ENCODE measurements at regions of chr10 and their contacts with region 1.

Region 1: GRCh38 chr10:119207367-119207668 is at the start of gene GRK5:
- DNase-seq: peak; percentile 98
- ATAC-seq: peak; percentile 83
- H3K4me3 ChIP-seq: peak within 1 kb of the TSS; percentile 44 to 94 (median 74)
- H3K4me3 Mint-ChIP-seq: peak within 1 kb of the TSS; percentile 95
- H3K27ac ChIP-seq: peak within 1 kb of the TSS; percentile 73 to 83
- H3K27ac Mint-ChIP-seq: peak within 1 kb of the TSS; percentile 95
- H3K4me1 ChIP-seq: peaks cover 27 to 38% of the 10 kb centered on the region in 2 donors
- H3K4me1 Mint-ChIP-seq: peaks cover 43% of the 10 kb centered on the region
- H3K27me3 ChIP-seq: no peaks in the 10 kb centered on the region
- H3K27me3 Mint-ChIP-seq: no peaks in the 10 kb centered on the region
- CTCF ChIP-seq: no peak
- total RNA-seq, gene GRK5: 54.8 and 57.2 TPM in 2 replicates

Region 2: GRCh38 chr10:119080521-119081260 is 126.6 kb before region 1 on chr10 and contains the start of gene EIF3A:
- CTCF ChIA-PET with region 1: no interaction called
- POLR2A ChIA-PET with region 1: no interaction called
- intact Hi-C with region 1: loop called (anchors 1 kb)
- DNase-seq: peak; percentile 95
- ATAC-seq: peak; percentile 81
- H3K4me3 ChIP-seq: peak within 1 kb of the TSS; percentile 69 to 93 (median 86)
- H3K4me3 Mint-ChIP-seq: peak within 1 kb of the TSS; percentile 96
- H3K27ac ChIP-seq: peak within 1 kb of the TSS; percentile 92 to 97
- H3K27ac Mint-ChIP-seq: peak within 1 kb of the TSS; percentile 96
- H3K4me1 ChIP-seq: peaks cover 36 to 52% of the 10 kb centered on the region in 2 donors
- H3K4me1 Mint-ChIP-seq: peaks cover 50% of the 10 kb centered on the region
- H3K27me3 ChIP-seq: no peaks in the 10 kb centered on the region
- H3K27me3 Mint-ChIP-seq: no peaks in the 10 kb centered on the region
- CTCF ChIP-seq: no peak
- total RNA-seq, gene EIF3A: 94.3 and 94.5 TPM in 2 replicates

Region 3: GRCh38 chr10:119217991-119218490 is 10.7 kb after region 1 on chr10:
- CTCF ChIA-PET with region 1: interaction called, 21 read pairs
- POLR2A ChIA-PET with region 1: no interaction called
- intact Hi-C with region 1: no loop called
- DNase-seq: no peak
- ATAC-seq: no peak
- H3K4me3 ChIP-seq: no peak overlapping the region
- H3K4me3 Mint-ChIP-seq: no peak overlapping the region
- H3K27ac ChIP-seq: no peak overlapping the region
- H3K27ac Mint-ChIP-seq: no peak overlapping the region
- H3K4me1 ChIP-seq: peaks cover 9 to 20% of the 10 kb centered on the region in 2 donors
- H3K4me1 Mint-ChIP-seq: peaks cover 36% of the 10 kb centered on the region
- H3K27me3 ChIP-seq: no peaks in the 10 kb centered on the region
- H3K27me3 Mint-ChIP-seq: no peaks in the 10 kb centered on the region
- CTCF ChIP-seq: no peak

Region 4: DNA sequence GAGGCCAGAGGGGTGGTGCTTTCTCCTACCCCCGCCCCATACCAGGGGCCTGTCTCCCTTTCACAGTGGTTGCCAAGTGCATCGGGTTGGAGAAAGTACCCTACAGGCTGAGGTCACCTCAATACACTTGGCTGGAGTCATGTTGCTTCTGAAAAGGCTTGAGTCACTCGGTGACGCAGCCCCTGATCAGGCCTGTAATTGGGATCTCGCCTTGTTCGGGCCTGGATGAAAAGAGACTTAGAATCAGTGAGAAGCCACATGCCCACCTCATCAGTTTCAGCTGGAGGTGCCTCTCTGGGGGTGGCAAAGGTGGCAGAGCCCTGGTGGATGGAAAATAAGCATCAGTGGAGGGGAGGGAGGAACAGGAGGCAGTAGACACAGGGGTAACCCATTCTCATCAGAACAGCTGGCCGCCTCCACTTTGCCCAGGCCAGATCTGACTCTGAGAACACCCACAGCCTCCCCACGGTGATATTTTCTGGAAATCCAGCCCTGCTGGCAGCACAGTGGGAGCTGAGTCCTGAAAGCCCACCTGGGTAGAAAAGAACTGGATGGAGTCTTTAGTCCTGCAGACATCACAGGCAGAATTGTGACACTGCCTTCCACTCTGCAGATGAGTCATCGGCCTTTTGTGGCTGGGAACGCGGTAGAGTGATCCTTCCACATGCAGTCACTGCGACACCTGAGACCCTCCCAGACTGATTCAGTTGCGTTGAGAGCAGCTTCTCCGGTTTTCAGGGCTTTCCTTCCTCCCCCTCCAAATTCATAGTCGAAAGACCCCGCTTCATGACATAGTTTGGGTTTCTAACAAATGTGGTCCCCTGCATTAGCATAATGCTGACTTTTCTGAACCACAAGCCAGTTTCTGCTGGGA is 108.0 kb after region 1 on chr10:
- CTCF ChIA-PET with region 1: interaction called, 118 read pairs
- POLR2A ChIA-PET with region 1: no interaction called
- intact Hi-C with region 1: no loop called
- DNase-seq: no peak
- ATAC-seq: peak; percentile 32
- H3K4me3 ChIP-seq: no peak overlapping the region
- H3K4me3 Mint-ChIP-seq: peak overlapping the region; percentile 62
- H3K27ac ChIP-seq: no peak overlapping the region
- H3K27ac Mint-ChIP-seq: peak overlapping the region; percentile 89
- H3K4me1 ChIP-seq: peaks cover 66 to 86% of the 10 kb centered on the region in 2 donors
- H3K4me1 Mint-ChIP-seq: peaks cover 91% of the 10 kb centered on the region
- H3K27me3 ChIP-seq: no peaks in the 10 kb centered on the region
- H3K27me3 Mint-ChIP-seq: no peaks in the 10 kb centered on the region
- CTCF ChIP-seq: no peak

Region 5: DNA sequence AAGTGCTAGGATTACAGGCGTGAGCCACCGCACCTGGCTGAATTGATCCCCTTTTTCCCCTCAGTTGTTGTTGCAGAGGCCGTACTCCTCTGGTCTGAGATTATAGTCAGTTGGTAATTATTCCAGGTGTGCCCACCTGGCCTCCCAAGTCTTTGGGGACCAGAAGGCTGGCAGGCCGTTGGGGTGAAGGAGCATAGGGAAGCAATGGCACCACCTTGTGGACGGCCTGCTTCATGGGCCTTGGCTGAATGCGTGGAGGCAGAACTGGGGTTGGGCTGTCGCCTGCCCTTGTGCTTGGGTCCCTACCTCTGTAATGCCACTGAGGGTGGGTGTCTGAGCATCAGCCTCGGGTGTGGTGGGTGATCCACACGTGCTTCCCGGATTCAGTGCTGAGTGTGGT is 209.5 kb after region 1 on chr10:
- CTCF ChIA-PET with region 1: interaction called, 106 read pairs
- POLR2A ChIA-PET with region 1: interaction called, 9 read pairs
- intact Hi-C with region 1: loop called (anchors 1 kb)
- DNase-seq: peak; percentile 83
- ATAC-seq: peak; percentile 90
- H3K4me3 ChIP-seq: no peak overlapping the region
- H3K4me3 Mint-ChIP-seq: no peak overlapping the region
- H3K27ac ChIP-seq: no peak overlapping the region
- H3K27ac Mint-ChIP-seq: peak overlapping the region; percentile 62
- H3K4me1 ChIP-seq: peaks cover 0 to 8% of the 10 kb centered on the region in 2 donors
- H3K4me1 Mint-ChIP-seq: peaks cover 6% of the 10 kb centered on the region
- H3K27me3 ChIP-seq: no peaks in the 10 kb centered on the region
- H3K27me3 Mint-ChIP-seq: no peaks in the 10 kb centered on the region
- CTCF ChIP-seq: peak; percentile 88

Region 6: DNA sequence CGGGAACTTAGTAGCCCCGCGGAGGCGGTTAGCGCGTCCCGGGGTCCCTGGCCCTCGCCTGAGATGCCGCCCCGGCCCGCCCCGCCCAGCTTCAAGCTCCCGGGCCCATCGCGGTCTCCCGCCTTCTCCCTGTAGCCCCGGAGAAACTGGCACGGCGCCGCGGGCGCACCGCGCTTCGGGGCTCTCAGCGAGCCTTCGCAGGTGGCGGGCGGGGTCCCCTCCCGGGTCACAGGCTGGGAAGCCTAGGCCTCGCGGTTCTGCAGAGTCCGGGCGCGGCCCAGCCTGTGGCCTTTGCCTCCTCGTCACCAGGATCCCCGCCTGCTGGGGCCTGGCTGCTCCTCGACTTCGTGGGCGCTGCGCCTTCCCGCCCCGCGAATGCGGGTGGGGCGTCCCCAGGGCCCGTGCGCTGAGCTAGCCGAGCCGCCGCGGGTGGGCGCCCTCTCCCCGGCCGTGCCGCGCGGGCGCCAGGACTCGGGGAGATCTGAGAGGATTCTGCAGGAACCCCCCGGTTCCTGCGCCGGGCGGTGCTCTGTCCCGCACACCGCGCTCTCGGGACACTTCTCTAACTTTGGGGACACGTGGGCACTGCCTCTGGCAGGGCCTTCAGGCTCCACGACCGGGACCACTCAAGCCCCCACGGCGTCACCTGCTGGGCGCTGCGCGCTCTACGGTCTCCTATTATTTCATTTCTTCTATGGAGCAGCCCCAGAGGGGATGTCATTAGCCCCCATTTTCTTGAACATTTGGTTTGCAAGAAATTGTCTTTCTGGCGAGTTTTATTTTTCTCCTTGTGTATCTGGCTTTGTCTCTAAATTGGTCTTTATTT is 335.9 kb after region 1 on chr10:
- CTCF ChIA-PET with region 1: interaction called, 19 read pairs
- POLR2A ChIA-PET with region 1: interaction called, 16 read pairs
- intact Hi-C with region 1: loop called (anchors 1 kb)
- DNase-seq: peak; percentile 81
- ATAC-seq: peak; percentile 46
- H3K4me3 ChIP-seq: peak overlapping the region in 4 of 5 experiments; percentile 58 to 78 (median 72)
- H3K4me3 Mint-ChIP-seq: peak overlapping the region; percentile 95
- H3K27ac ChIP-seq: no peak overlapping the region
- H3K27ac Mint-ChIP-seq: peak overlapping the region; percentile 85
- H3K4me1 ChIP-seq: peaks cover 11 to 22% of the 10 kb centered on the region in 2 donors
- H3K4me1 Mint-ChIP-seq: peaks cover 29% of the 10 kb centered on the region
- H3K27me3 ChIP-seq: peaks cover 0 to 3% (median 0%) of the 10 kb centered on the region in 4 experiments
- H3K27me3 Mint-ChIP-seq: peaks cover 8% of the 10 kb centered on the region
- CTCF ChIP-seq: peak; percentile 71